CD8-positive, alpha-beta T cell (primary cell): ENCODE measurements at regions of chr3 and their contacts with region 1.

Region 1: GRCh38 chr3:137032465-137033120 is 74.8 kb downstream of the IL20RB start:
- DNase-seq: peak; percentile 56 to 84 (median 73)
- ATAC-seq: peak; percentile 86
- H3K4me3 ChIP-seq: peak overlapping the region; percentile 13 to 19
- H3K4me3 Mint-ChIP-seq: peak overlapping the region; percentile 77
- H3K27ac ChIP-seq: no peak overlapping the region
- H3K27ac Mint-ChIP-seq: no peak overlapping the region
- H3K4me1 ChIP-seq: peaks cover 4% of the 10 kb centered on the region
- H3K4me1 Mint-ChIP-seq: peaks cover 9% of the 10 kb centered on the region
- H3K27me3 ChIP-seq: no peaks in the 10 kb centered on the region
- H3K27me3 Mint-ChIP-seq: peaks cover 22% of the 10 kb centered on the region
- CTCF ChIP-seq: peak; percentile 99

Region 2: GRCh38 chr3:136177876-136178275 is 854.7 kb before region 1 on chr3:
- CTCF ChIA-PET with region 1: no interaction called
- POLR2A ChIA-PET with region 1: no interaction called
- intact Hi-C with region 1: no loop called
- DNase-seq: no peak
- ATAC-seq: no peak
- H3K4me3 ChIP-seq: no peak overlapping the region
- H3K4me3 Mint-ChIP-seq: no peak overlapping the region
- H3K27ac ChIP-seq: no peak overlapping the region
- H3K27ac Mint-ChIP-seq: no peak overlapping the region
- H3K4me1 ChIP-seq: peaks cover 87% of the 10 kb centered on the region
- H3K4me1 Mint-ChIP-seq: peaks cover 64% of the 10 kb centered on the region
- H3K27me3 ChIP-seq: no peaks in the 10 kb centered on the region
- H3K27me3 Mint-ChIP-seq: no peaks in the 10 kb centered on the region
- CTCF ChIP-seq: no peak

Region 3: DNA sequence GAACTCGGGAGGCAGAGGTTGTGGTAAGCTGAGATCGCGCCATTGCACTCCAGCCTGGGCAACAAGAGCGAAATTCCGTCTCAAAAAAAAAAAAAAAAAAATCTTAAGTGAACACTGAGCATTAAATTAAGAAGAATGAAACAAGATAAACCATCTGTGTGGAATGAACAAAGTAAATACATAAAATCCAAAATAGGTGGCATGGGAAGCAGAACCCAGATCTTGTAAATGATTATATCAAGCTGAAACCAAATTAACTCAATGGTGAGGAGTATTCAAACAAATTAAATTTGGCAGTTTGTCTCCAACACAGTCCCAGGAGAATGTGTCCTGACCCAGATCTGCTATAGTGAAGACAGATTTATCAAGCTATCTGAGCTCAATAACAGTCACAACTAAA is 312.5 kb before region 1 on chr3:
- CTCF ChIA-PET with region 1: no interaction called
- POLR2A ChIA-PET with region 1: no interaction called
- intact Hi-C with region 1: no loop called
- DNase-seq: no peak
- ATAC-seq: no peak
- H3K4me3 ChIP-seq: no peak overlapping the region
- H3K4me3 Mint-ChIP-seq: no peak overlapping the region
- H3K27ac ChIP-seq: no peak overlapping the region
- H3K27ac Mint-ChIP-seq: no peak overlapping the region
- H3K4me1 ChIP-seq: peaks cover 8% of the 10 kb centered on the region
- H3K4me1 Mint-ChIP-seq: peaks cover 36% of the 10 kb centered on the region
- H3K27me3 ChIP-seq: no peaks in the 10 kb centered on the region
- H3K27me3 Mint-ChIP-seq: no peaks in the 10 kb centered on the region
- CTCF ChIP-seq: no peak

Region 4: DNA sequence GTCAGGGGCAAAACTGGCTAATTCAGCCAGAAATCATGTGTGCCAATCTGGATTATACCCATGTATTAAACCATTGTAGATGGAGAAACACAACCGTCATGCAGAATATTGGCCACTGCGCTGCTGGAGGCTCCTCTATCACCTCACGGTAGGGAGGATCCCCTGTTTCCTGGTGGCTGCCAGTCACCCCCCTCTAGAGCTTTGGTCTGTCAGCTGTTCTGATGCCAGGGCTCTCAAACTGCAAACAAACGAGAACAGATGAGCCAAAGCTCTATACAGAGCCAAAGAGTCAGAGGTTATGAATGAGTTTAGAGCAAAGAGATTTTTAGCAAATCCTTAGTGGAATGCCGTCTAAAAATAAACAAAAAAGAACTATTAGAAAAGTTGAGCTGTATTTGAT is 12.3 kb before region 1 on chr3:
- CTCF ChIA-PET with region 1: interaction called, 10 read pairs
- POLR2A ChIA-PET with region 1: no interaction called
- intact Hi-C with region 1: no loop called
- DNase-seq: no peak
- ATAC-seq: no peak
- H3K4me3 ChIP-seq: no peak overlapping the region
- H3K4me3 Mint-ChIP-seq: no peak overlapping the region
- H3K27ac ChIP-seq: no peak overlapping the region
- H3K27ac Mint-ChIP-seq: no peak overlapping the region
- H3K4me1 ChIP-seq: no peaks in the 10 kb centered on the region
- H3K4me1 Mint-ChIP-seq: no peaks in the 10 kb centered on the region
- H3K27me3 ChIP-seq: no peaks in the 10 kb centered on the region
- H3K27me3 Mint-ChIP-seq: peaks cover 4% of the 10 kb centered on the region
- CTCF ChIP-seq: no peak

Region 5: GRCh38 chr3:137946345-137946973 is 913.9 kb after region 1 on chr3:
- CTCF ChIA-PET with region 1: interaction called, 3 read pairs
- POLR2A ChIA-PET with region 1: no interaction called
- intact Hi-C with region 1: loop called in 1 of 2 experiments (anchors 5 kb)
- DNase-seq: peak in 8 of 9 experiments; percentile 24 to 69 (median 44)
- ATAC-seq: no peak
- H3K4me3 ChIP-seq: no peak overlapping the region
- H3K4me3 Mint-ChIP-seq: no peak overlapping the region
- H3K27ac ChIP-seq: no peak overlapping the region
- H3K27ac Mint-ChIP-seq: no peak overlapping the region
- H3K4me1 ChIP-seq: no peaks in the 10 kb centered on the region
- H3K4me1 Mint-ChIP-seq: no peaks in the 10 kb centered on the region
- H3K27me3 ChIP-seq: no peaks in the 10 kb centered on the region
- H3K27me3 Mint-ChIP-seq: no peaks in the 10 kb centered on the region
- CTCF ChIP-seq: peak; percentile 65